ENCODE measurements at regions of chr12 and their contacts with region 1.

Region 1: GRCh38 chr12:89019408-89020120 is 332.7 kb downstream of the DUSP6 start:
- DNase-seq: peak; percentile 95
- H3K4me3 ChIP-seq: peak overlapping the region in 2 of 3 experiments; percentile 18 to 20
- H3K27ac ChIP-seq: no peak overlapping the region
- H3K4me1 ChIP-seq: peaks cover 8% of the 10 kb centered on the region
- H3K27me3 ChIP-seq: no peaks in the 10 kb centered on the region
- CTCF ChIP-seq: peak; percentile 81 to 83
- POLR2A ChIP-seq: no peak

Region 2: GRCh38 chr12:88703790-88704189 is 315.8 kb before region 1 on chr12:
- CTCF ChIA-PET with region 1: no interaction called
- POLR2A ChIA-PET with region 1: no interaction called
- dilution Hi-C with region 1: no loop called
- intact Hi-C with region 1: no loop called
- DNase-seq: no peak
- H3K4me3 ChIP-seq: no peak overlapping the region
- H3K27ac ChIP-seq: no peak overlapping the region
- H3K4me1 ChIP-seq: no peaks in the 10 kb centered on the region
- H3K27me3 ChIP-seq: no peaks in the 10 kb centered on the region
- CTCF ChIP-seq: no peak
- POLR2A ChIP-seq: no peak

Region 3: GRCh38 chr12:88986056-88986455 is 33.5 kb before region 1 on chr12:
- CTCF ChIA-PET with region 1: no interaction called
- POLR2A ChIA-PET with region 1: no interaction called
- dilution Hi-C with region 1: no loop called
- intact Hi-C with region 1: no loop called
- DNase-seq: peak; percentile 18
- H3K4me3 ChIP-seq: no peak overlapping the region
- H3K27ac ChIP-seq: no peak overlapping the region
- H3K4me1 ChIP-seq: no peaks in the 10 kb centered on the region
- H3K27me3 ChIP-seq: no peaks in the 10 kb centered on the region
- CTCF ChIP-seq: no peak
- POLR2A ChIP-seq: no peak

Region 4: GRCh38 chr12:89033062-89033461 is 13.5 kb after region 1 on chr12:
- CTCF ChIA-PET with region 1: interaction called, 10 read pairs
- POLR2A ChIA-PET with region 1: no interaction called
- dilution Hi-C with region 1: no loop called
- intact Hi-C with region 1: no loop called
- DNase-seq: no peak
- H3K4me3 ChIP-seq: no peak overlapping the region
- H3K27ac ChIP-seq: no peak overlapping the region
- H3K4me1 ChIP-seq: no peaks in the 10 kb centered on the region
- H3K27me3 ChIP-seq: no peaks in the 10 kb centered on the region
- CTCF ChIP-seq: no peak
- POLR2A ChIP-seq: no peak

Region 5: GRCh38 chr12:89345830-89346740 is 326.5 kb after region 1 on chr12:
- CTCF ChIA-PET with region 1: interaction called, 29 read pairs
- POLR2A ChIA-PET with region 1: interaction called, 4 read pairs
- dilution Hi-C with region 1: no loop called
- intact Hi-C with region 1: loop called (anchors 1 kb)
- DNase-seq: peak; percentile 99
- H3K4me3 ChIP-seq: peak overlapping the region in 1 of 3 experiments; percentile 90
- H3K27ac ChIP-seq: peak overlapping the region; percentile 60
- H3K4me1 ChIP-seq: peaks cover 48% of the 10 kb centered on the region
- H3K27me3 ChIP-seq: no peaks in the 10 kb centered on the region
- CTCF ChIP-seq: no peak
- POLR2A ChIP-seq: no peak

Region 6: GRCh38 chr12:89470741-89471509 is 451.4 kb after region 1 on chr12:
- CTCF ChIA-PET with region 1: interaction called, 17 read pairs
- POLR2A ChIA-PET with region 1: no interaction called
- dilution Hi-C with region 1: no loop called
- intact Hi-C with region 1: no loop called
- DNase-seq: peak; percentile 73
- H3K4me3 ChIP-seq: no peak overlapping the region
- H3K27ac ChIP-seq: no peak overlapping the region
- H3K4me1 ChIP-seq: peaks cover 9% of the 10 kb centered on the region
- H3K27me3 ChIP-seq: no peaks in the 10 kb centered on the region
- CTCF ChIP-seq: peak; percentile 40 to 56
- POLR2A ChIP-seq: no peak

Region 7: GRCh38 chr12:89529738-89530137 is 510.2 kb after region 1 on chr12:
- CTCF ChIA-PET with region 1: interaction called, 171 read pairs
- POLR2A ChIA-PET with region 1: interaction called, 5 read pairs
- dilution Hi-C with region 1: no loop called
- intact Hi-C with region 1: loop called (anchors 1 kb)
- DNase-seq: peak; percentile 73
- H3K4me3 ChIP-seq: no peak overlapping the region
- H3K27ac ChIP-seq: no peak overlapping the region
- H3K4me1 ChIP-seq: peaks cover 4% of the 10 kb centered on the region
- H3K27me3 ChIP-seq: no peaks in the 10 kb centered on the region
- CTCF ChIP-seq: peak; percentile 49 to 51
- POLR2A ChIP-seq: no peak

Measured in endothelial cell of umbilical vein (primary cell).